Ovary (tissue), 10 donors: ENCODE measurements at regions of chr9 and their contacts with region 1.

Region 1: GRCh38 chr9:73736270-73736669 is 584.6 kb downstream of the ANXA1 start:
- DNase-seq: no peak
- H3K4me3 ChIP-seq: no peak overlapping the region
- H3K27ac ChIP-seq: no peak overlapping the region
- H3K4me1 ChIP-seq: no peaks in the 10 kb centered on the region
- H3K27me3 ChIP-seq: no peaks in the 10 kb centered on the region
- CTCF ChIP-seq: no peak
- EP300 ChIP-seq: no peak
- POLR2A ChIP-seq: no peak

Region 2: DNA sequence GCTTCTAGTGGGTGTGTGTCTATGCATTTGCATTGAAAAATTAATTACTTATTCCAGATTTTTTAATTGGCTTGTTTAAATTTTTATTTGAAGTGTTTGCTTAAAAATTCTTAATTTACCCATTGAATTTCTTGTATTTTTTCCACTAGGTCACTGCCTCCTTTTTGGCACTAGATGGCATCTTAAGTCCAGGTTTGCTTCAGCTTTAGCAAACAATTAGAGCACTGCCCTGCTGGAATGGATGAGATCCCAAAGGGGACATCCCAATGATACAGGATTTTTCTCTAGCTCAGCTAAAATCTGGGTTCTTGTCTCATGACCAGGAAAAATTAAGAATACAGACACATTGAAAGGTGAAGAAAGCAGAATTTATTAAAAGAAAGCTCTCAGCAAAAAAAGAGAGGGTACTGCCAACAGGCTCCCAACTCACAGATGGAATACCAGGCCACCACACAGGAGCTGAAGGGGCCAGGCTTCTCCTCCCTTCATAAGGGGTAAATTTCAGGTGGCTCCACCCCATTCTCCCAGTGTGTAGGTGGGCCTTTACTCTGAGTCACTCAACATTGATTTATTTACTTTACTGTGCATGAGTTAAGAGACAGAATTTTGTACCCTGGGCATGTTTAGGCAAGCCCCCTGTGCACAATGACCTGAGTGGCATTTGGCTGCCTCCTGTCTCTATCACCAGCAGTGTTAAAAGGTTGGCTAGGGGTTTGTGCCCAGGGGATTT is 52.2 kb before region 1 on chr9:
- intact Hi-C with region 1: no loop called
- DNase-seq: no peak
- H3K4me3 ChIP-seq: no peak overlapping the region
- H3K27ac ChIP-seq: no peak overlapping the region
- H3K4me1 ChIP-seq: no peaks in the 10 kb centered on the region
- H3K27me3 ChIP-seq: no peaks in the 10 kb centered on the region
- CTCF ChIP-seq: no peak
- EP300 ChIP-seq: no peak
- POLR2A ChIP-seq: no peak

Region 3: GRCh38 chr9:73753171-73753570 is 16.9 kb after region 1 on chr9:
- intact Hi-C with region 1: loop called in 1 of 4 experiments (anchors 2 kb)
- DNase-seq: no peak
- H3K4me3 ChIP-seq: no peak overlapping the region
- H3K27ac ChIP-seq: no peak overlapping the region
- H3K4me1 ChIP-seq: no peaks in the 10 kb centered on the region
- H3K27me3 ChIP-seq: no peaks in the 10 kb centered on the region
- CTCF ChIP-seq: no peak
- EP300 ChIP-seq: no peak
- POLR2A ChIP-seq: no peak

Region 4: DNA sequence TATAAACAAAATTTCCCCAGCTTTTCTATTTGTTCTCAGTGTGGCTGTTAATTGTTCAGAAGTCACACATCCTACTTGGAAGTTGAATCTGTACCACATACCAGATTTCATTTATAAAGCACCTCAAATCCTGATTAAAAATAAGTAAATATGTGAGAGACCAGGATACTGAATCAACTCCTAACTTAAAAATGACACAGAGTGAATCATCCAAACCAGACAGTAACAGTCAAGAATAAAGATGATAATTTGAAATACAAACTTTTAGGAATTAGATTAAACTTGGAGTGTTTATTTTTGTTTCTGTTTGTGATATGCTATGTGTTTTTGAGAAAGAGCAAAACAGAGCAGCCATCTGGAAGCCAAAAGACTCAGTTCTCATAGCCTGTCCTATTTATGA is 127.7 kb after region 1 on chr9:
- intact Hi-C with region 1: no loop called
- DNase-seq: no peak
- H3K4me3 ChIP-seq: no peak overlapping the region
- H3K27ac ChIP-seq: no peak overlapping the region
- H3K4me1 ChIP-seq: no peaks in the 10 kb centered on the region
- H3K27me3 ChIP-seq: no peaks in the 10 kb centered on the region
- CTCF ChIP-seq: no peak
- EP300 ChIP-seq: no peak
- POLR2A ChIP-seq: no peak